ENCODE measurements at regions of chr20 and their contacts with region 1.

Region 1: GRCh38 chr20:324177-325044 is 941 bp upstream of the SOX12 start:
- DNase-seq: peak; percentile 74 to 96 (median 84)
- ATAC-seq: peak; percentile 75
- H3K4me3 ChIP-seq: peak overlapping the region; percentile 80
- H3K4me3 Mint-ChIP-seq: peak overlapping the region; percentile 88 to 97 (median 94)
- H3K27ac ChIP-seq: peak overlapping the region; percentile 77
- H3K27ac Mint-ChIP-seq: peak overlapping the region; percentile 84 to 96 (median 94)
- H3K4me1 ChIP-seq: peaks cover 7 to 9% of the 10 kb centered on the region in 2 donors
- H3K4me1 Mint-ChIP-seq: peaks cover 7 to 20% (median 17%) of the 10 kb centered on the region in 7 donors
- H3K27me3 ChIP-seq: no peaks in the 10 kb centered on the region
- H3K27me3 Mint-ChIP-seq: peaks cover 0 to 8% (median 0%) of the 10 kb centered on the region in 5 donors

Region 2: GRCh38 chr20:297098-297924 is 27.1 kb before region 1 on chr20 and contains the start of gene ZCCHC3:
- CTCF ChIA-PET with region 1: no interaction called
- POLR2A ChIA-PET with region 1: interaction called, 74 read pairs
- intact Hi-C with region 1: loop called (anchors 1 kb)
- DNase-seq: peak; percentile 72 to 89 (median 84)
- ATAC-seq: peak; percentile 94
- H3K4me3 ChIP-seq: peak within 1 kb of the TSS; percentile 96
- H3K4me3 Mint-ChIP-seq: peak within 1 kb of the TSS; percentile 92 to 100 (median 98)
- H3K27ac ChIP-seq: peak within 1 kb of the TSS; percentile 91
- H3K27ac Mint-ChIP-seq: peak within 1 kb of the TSS; percentile 94 to 100 (median 97)
- H3K4me1 ChIP-seq: peaks cover 14 to 21% of the 10 kb centered on the region in 2 donors
- H3K4me1 Mint-ChIP-seq: peaks cover 33 to 51% (median 40%) of the 10 kb centered on the region in 7 donors
- H3K27me3 ChIP-seq: no peaks in the 10 kb centered on the region
- H3K27me3 Mint-ChIP-seq: peaks cover 0 to 2% (median 0%) of the 10 kb centered on the region in 5 donors
- total RNA-seq, gene ZCCHC3: 14.6 to 31.9 (median 27.1) TPM

Region 3: GRCh38 chr20:347640-348484 is 23.5 kb after region 1 on chr20:
- CTCF ChIA-PET with region 1: no interaction called
- POLR2A ChIA-PET with region 1: no interaction called
- intact Hi-C with region 1: loop called (anchors 1 to 2 kb)
- DNase-seq: peak in 5 of 9 donors; percentile 10 to 70 (median 48)
- ATAC-seq: peak; percentile 83
- H3K4me3 ChIP-seq: peak overlapping the region; percentile 71
- H3K4me3 Mint-ChIP-seq: peak overlapping the region; percentile 85 to 98 (median 92)
- H3K27ac ChIP-seq: peak overlapping the region; percentile 56
- H3K27ac Mint-ChIP-seq: peak overlapping the region; percentile 24 to 81 (median 61)
- H3K4me1 ChIP-seq: peaks cover 0 to 4% of the 10 kb centered on the region in 2 donors
- H3K4me1 Mint-ChIP-seq: peaks cover 13 to 25% (median 15%) of the 10 kb centered on the region in 7 donors
- H3K27me3 ChIP-seq: no peaks in the 10 kb centered on the region
- H3K27me3 Mint-ChIP-seq: peaks cover 0 to 17% (median 0%) of the 10 kb centered on the region in 5 donors

Region 4: DNA sequence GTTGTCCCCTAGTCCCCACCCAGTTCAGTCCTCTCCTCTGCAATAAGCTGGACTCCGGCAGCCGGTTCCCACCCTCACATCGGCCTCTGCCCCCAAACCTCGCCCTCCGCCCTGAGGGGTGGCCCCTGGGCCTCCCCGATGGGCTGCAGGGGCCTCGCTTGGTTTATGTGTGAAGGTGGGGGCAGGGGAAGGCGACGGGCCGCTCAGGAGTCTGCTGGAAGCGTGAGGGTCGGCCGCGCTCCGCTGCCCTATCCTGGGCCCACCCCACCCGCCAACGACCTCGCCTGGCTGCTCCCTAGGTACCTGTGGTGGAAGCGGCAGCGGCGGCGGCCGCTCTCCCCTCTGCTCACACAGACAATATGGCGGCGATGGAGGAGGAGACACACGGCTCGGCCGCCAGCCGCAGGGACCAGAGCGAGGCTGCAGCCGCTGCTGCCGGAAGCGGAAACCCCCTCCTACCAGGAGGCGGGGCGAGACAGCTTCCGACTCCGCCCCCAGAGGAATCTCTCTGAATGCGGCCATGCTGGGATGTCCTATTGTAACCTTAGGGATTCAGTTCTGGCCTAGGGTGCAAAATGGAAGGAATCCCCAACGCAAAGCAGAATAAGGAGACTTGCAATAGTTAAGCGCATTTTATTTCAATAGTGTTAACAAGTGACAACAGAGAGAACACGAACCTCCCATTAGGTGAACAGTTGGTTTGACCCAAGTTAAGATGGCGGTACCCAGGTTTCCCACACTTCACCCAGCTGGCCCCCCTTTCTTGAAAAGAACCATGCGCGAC is 219.2 kb after region 1 on chr20 and contains the start of gene CSNK2A1:
- CTCF ChIA-PET with region 1: no interaction called
- POLR2A ChIA-PET with region 1: no interaction called
- intact Hi-C with region 1: loop called in 1 of 2 experiments (anchors 1 kb)
- DNase-seq: peak; percentile 93 to 99 (median 97)
- ATAC-seq: peak; percentile 97
- H3K4me3 ChIP-seq: peak within 1 kb of the TSS; percentile 59
- H3K4me3 Mint-ChIP-seq: peak within 1 kb of the TSS; percentile 86 to 100 (median 91)
- H3K27ac ChIP-seq: peak within 1 kb of the TSS; percentile 94
- H3K27ac Mint-ChIP-seq: peak within 1 kb of the TSS; percentile 97 to 100 (median 98)
- H3K4me1 ChIP-seq: peaks cover 17 to 39% of the 10 kb centered on the region in 2 donors
- H3K4me1 Mint-ChIP-seq: peaks cover 40 to 58% (median 54%) of the 10 kb centered on the region in 7 donors
- H3K27me3 ChIP-seq: no peaks in the 10 kb centered on the region
- H3K27me3 Mint-ChIP-seq: peaks cover 0 to 9% (median 5%) of the 10 kb centered on the region in 5 donors
- total RNA-seq, gene CSNK2A1: 69.7 to 117 (median 90.8) TPM

Region 5: DNA sequence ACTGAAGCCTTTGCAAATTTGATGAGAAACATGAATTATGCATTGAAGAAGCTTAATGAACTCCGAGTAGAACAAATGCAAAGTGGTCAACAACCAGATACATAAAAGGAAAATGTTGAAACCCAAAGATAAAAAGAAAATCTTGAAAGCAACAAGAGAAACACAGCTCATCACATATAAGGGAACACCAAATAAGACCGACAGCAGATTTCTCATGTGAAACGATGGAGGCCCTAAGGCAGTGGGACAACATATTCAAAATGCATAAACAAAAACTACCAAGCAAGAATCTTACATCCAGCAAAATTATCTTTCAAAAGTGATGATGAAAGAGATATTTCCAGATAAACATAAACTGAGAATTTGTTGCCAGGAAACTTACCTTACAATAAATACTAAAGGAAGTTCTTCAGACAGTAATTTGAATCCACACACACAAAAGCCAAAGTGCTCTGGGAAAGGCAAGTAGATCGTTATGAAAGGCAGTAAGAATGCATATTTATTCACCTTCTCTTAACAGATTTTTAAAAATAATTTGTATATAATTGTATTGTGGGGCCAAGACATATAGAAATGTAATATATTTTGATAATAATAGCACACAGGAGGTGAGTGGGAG is 421.4 kb after region 1 on chr20:
- CTCF ChIA-PET with region 1: no interaction called
- POLR2A ChIA-PET with region 1: no interaction called
- intact Hi-C with region 1: no loop called
- DNase-seq: no peak
- ATAC-seq: no peak
- H3K4me3 ChIP-seq: no peak overlapping the region
- H3K4me3 Mint-ChIP-seq: no peak overlapping the region
- H3K27ac ChIP-seq: no peak overlapping the region
- H3K27ac Mint-ChIP-seq: no peak overlapping the region
- H3K4me1 ChIP-seq: no peaks in the 10 kb centered on the region
- H3K4me1 Mint-ChIP-seq: peaks cover 0 to 4% (median 0%) of the 10 kb centered on the region in 7 donors
- H3K27me3 ChIP-seq: no peaks in the 10 kb centered on the region
- H3K27me3 Mint-ChIP-seq: peaks cover 4 to 31% (median 24%) of the 10 kb centered on the region in 5 donors

Region 6: DNA sequence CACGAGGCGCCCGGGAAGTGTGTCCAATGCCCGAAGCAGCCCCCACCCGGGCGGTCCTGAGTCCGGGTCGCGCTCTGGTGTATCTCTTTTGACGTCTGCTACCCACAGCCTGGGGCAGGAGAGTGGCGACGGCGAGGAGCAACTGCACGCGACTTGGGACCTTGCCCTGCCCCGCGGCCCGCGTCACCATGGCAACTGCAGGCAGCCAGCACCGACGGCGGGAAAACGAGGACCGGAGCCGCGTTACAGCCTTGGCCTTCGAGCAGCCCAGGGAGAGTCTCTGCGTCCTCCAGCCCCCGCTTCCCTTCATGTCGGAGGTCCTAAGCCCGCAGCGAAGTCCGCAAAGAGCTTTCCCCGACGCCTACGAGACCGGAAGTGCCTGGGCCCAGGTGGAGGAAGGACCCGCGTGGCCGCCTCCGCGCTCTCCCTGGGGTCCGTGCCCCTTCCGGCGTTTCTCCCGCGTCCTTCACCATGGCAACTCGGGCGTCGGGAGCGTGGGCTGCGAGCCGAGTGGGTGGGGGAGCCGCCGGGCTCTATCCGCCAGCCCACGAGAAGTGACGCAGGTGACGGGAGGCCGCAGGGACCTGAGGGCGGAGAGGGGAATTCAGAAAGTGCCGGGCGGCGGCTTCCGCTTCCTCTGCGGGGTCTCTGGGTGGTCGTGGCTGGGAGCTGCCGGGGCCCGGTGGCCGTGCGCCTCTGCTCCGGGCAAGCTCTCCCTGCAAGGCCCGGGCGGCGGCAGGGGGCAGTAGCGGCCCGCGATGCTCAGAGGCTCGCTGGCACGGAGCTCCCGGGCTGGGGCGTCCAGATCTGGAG is 1882.8 kb after region 1 on chr20:
- CTCF ChIA-PET with region 1: no interaction called
- POLR2A ChIA-PET with region 1: no interaction called
- intact Hi-C with region 1: no loop called
- DNase-seq: peak in 8 of 9 donors; percentile 17 to 84 (median 30)
- ATAC-seq: peak; percentile 75
- H3K4me3 ChIP-seq: peak overlapping the region; percentile 46
- H3K4me3 Mint-ChIP-seq: peak overlapping the region; percentile 64 to 86 (median 80)
- H3K27ac ChIP-seq: no peak overlapping the region
- H3K27ac Mint-ChIP-seq: peak overlapping the region in 1 of 9 donors; percentile 40
- H3K4me1 ChIP-seq: peaks cover 6 to 8% of the 10 kb centered on the region in 2 donors
- H3K4me1 Mint-ChIP-seq: peaks cover 0 to 5% (median 0%) of the 10 kb centered on the region in 7 donors
- H3K27me3 ChIP-seq: no peaks in the 10 kb centered on the region
- H3K27me3 Mint-ChIP-seq: peaks cover 10 to 39% (median 16%) of the 10 kb centered on the region in 5 donors

Measured in naive thymus-derived CD4-positive, alpha-beta T cell (primary cell).